ENCODE measurements at regions of chr1 and their contacts with region 1.

Region 1: DNA sequence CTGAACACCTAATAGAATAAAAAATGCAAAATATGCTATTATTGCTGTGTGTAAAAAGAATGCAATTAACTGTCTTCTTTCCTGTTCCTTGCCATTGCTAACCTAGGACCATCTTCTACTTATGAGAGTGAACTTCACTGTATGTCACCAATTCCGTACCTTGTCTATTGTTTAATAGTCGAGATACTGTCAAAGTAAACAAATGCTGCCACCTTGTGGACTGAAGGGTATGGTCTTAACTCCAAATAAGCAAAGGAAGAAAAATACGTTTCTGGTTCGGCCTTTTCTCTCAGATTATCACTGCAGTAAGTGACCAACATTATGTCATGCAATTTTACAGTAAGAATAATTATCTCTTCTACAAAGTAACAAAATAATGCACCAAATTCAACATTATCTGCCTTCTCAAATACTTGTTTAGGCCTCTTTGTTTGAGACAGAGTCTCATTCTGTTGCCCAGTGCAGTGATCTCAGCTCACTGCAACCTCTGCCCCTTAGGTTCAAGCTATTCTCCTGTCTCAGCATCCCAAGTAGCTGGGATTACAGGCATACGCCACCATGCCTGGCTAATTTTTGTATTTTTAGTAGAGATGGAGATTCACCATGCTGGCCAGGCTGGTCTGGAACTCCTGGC is 133.4 kb downstream of the COP1 start:
- DNase-seq: peak; percentile 21 to 76 (median 64)
- H3K4me3 ChIP-seq: no peak overlapping the region
- H3K27ac ChIP-seq: no peak overlapping the region
- H3K4me1 ChIP-seq: peaks cover 0 to 4% of the 10 kb centered on the region in 2 donors
- H3K27me3 ChIP-seq: no peaks in the 10 kb centered on the region
- CTCF ChIP-seq: peak; percentile 39 to 85 (median 74)
- POLR2A ChIP-seq: no peak

Region 2: DNA sequence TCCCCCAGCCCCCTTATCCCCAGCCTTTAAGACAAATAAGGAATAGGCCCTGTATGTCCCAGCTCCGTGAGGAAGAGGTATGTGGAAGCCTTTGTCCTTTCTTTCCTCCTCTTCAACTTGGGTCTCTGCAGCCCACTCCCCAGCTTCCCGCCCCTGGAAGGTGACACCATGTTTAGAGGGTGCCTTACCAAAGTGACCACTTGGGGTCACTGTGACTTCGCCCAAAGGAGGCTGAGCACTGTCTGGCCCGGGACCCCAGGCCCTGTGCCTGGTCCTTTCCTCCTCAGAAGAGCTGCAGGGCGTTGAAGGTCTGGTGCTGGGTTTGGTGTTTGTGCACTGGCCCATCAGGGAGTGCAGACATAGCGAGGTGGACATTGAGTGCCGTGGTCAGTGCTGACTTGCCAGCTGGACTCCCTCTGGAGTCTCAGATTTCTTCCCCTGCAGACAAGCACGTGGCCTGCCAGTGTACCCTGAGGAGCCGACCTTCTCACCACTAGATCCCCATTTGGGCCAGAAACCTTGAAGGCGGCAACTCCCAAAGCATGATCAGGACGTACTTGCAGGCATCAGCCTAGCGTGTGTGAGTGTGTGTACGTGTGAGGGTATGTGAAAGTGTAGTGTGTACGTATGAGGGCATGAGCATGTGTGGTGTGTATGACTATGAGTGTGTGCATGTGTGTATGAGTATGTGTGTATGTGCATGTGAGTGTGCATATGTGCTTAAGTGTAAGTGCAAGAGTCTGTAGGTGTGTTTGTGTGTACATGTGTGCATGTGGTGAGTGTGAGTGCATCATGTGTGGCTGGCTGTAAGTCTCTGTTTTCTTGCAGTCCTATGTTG is 699.6 kb before region 1 on chr1:
- intact Hi-C with region 1: loop called (anchors 10 kb)
- DNase-seq: peak in 5 of 7 donors; percentile 15 to 56 (median 23)
- H3K4me3 ChIP-seq: no peak overlapping the region
- H3K27ac ChIP-seq: no peak overlapping the region
- H3K4me1 ChIP-seq: no peaks in the 10 kb centered on the region
- H3K27me3 ChIP-seq: no peaks in the 10 kb centered on the region
- CTCF ChIP-seq: peak; percentile 41 to 67 (median 54)
- POLR2A ChIP-seq: no peak

Region 3: DNA sequence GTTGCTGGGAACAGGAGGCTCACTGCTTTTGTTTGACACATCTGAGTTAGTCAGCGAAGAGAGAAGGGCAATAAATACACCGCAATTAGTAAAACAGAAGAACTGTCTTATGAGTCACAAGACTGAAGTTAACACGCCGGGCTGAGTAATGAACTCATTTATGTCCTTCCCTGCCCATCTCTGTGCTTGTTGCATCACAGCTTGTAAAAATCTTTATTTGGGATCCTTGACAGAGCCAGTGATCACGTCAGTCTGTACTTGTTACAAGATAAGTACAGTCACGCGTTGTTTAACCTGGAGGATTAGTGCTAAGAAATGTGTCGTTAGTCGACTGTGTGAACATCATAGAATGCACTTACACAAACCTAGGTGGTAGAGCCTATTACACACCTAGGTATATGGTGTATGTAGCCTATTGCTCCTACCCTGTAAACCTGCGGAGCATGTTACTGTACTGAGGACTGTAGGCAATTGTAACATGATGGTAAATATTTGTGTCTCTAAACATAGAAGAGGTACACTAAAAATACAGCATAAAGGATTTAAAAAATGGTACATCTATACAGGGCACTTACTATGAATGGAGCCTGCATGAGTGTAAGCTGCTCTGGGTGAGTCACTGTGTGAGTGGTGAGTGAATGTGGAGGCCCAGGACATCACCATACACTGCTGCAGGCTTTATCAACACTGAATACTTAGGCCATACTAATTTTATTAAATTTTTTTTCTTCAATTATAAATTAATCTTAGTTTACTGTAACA is 602.4 kb before region 1 on chr1:
- intact Hi-C with region 1: loop called in 1 of 2 experiments (anchors 10 kb)
- DNase-seq: no peak
- H3K4me3 ChIP-seq: no peak overlapping the region
- H3K27ac ChIP-seq: no peak overlapping the region
- H3K4me1 ChIP-seq: no peaks in the 10 kb centered on the region
- H3K27me3 ChIP-seq: no peaks in the 10 kb centered on the region
- CTCF ChIP-seq: no peak
- POLR2A ChIP-seq: no peak

Region 4: GRCh38 chr1:175933801-175934200 is 139.8 kb before region 1 on chr1:
- intact Hi-C with region 1: no loop called
- DNase-seq: no peak
- H3K4me3 ChIP-seq: no peak overlapping the region
- H3K27ac ChIP-seq: no peak overlapping the region
- H3K4me1 ChIP-seq: no peaks in the 10 kb centered on the region
- H3K27me3 ChIP-seq: no peaks in the 10 kb centered on the region
- CTCF ChIP-seq: no peak
- POLR2A ChIP-seq: no peak

Measured in adrenal gland (tissue), 19 donors.